ENCODE measurements at regions of chr17 and their contacts with region 1.

Region 1: GRCh38 chr17:42760652-42761581 is at the start of gene RAMP2:
- DNase-seq: peak; percentile 71
- H3K4me3 Mint-ChIP-seq: peak within 1 kb of the TSS; percentile 44
- H3K27ac Mint-ChIP-seq: no peak within 1 kb of the TSS
- H3K4me1 Mint-ChIP-seq: peaks cover 4% of the 10 kb centered on the region
- H3K27me3 Mint-ChIP-seq: peaks cover 60% of the 10 kb centered on the region
- total RNA-seq, gene RAMP2: not detected in 2 replicates

Region 2: GRCh38 chr17:42577532-42578281 is 183.2 kb before region 1 on chr17 and contains the start of gene PSMC3IP:
- intact Hi-C with region 1: loop called (anchors 2 kb)
- DNase-seq: peak; percentile 98
- H3K4me3 Mint-ChIP-seq: peak within 1 kb of the TSS; percentile 88
- H3K27ac Mint-ChIP-seq: peak within 1 kb of the TSS; percentile 96
- H3K4me1 Mint-ChIP-seq: peaks cover 30% of the 10 kb centered on the region
- H3K27me3 Mint-ChIP-seq: no peaks in the 10 kb centered on the region
- total RNA-seq, gene PSMC3IP: 29.1 and 31.1 TPM in 2 replicates

Region 3: DNA sequence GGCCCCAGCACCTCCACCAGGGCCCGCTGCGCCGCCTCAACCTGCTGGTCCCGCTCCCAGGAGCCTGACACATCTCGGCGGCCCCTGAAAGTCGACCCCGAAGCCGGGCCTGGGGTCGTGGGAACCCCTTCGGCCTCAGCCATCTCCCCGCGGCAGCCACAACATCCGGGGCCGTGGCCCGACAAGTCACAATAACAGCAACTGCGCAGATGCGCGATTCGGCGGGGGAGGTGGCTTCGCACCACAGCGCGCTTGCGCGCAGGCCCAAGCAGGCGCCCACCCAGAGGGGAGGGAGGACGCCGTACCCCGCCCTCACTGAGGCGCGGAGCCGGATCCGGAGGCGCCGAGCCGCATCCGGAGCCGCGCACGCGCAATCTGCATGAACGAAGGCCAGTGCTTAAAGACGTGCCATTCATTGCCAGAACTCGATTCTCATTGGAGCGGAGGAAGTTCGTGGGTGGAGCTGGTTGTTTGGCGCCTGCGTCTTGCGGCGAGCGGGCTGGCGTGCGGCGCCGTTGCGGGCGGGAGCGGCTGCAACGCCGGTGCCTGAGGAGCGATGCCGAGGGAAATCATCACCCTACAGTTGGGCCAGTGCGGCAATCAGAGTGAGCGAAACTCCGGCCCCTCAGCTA is 151.6 kb before region 1 on chr17 and contains the starts of genes RETREG3 and TUBG1:
- intact Hi-C with region 1: loop called (anchors 10 kb)
- DNase-seq: peak; percentile 100
- H3K4me3 Mint-ChIP-seq: peak within 1 kb of the TSS; percentile 99
- H3K27ac Mint-ChIP-seq: peak within 1 kb of the TSS; percentile 94
- H3K4me1 Mint-ChIP-seq: peaks cover 30% of the 10 kb centered on the region
- H3K27me3 Mint-ChIP-seq: no peaks in the 10 kb centered on the region
- total RNA-seq, gene RETREG3: 35.8 and 38.3 TPM in 2 replicates
- total RNA-seq, gene TUBG1: 99.9 and 100 TPM in 2 replicates

Region 4: DNA sequence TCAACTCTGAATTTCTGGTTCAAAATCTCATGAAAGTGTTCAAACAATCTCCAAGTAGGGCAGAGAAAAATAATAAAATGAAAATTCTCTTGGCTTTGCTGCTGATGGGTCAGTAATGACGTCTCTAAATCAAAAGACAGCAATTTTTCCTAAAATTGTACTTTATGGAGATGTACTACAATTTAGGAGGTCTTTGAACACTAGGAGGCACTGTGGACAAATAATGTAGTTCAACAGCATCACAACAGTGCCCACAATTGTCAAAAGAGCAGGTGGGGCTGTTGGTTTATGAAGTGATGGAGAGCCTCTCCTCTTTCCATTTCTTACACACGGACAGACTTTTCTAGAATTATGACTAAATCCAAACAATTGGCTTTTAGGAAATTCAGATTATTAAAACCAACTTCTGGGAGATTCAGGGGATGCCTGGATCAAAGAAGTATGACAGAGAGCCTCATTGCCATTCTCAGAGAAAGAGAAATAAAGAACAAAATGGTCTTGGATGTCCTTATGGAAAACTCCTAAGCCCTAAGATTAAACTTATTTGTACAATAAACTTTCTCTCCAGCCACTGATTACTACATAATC is 39.8 kb before region 1 on chr17:
- intact Hi-C with region 1: loop called (anchors 1 kb)
- DNase-seq: peak; percentile 82
- H3K4me3 Mint-ChIP-seq: no peak overlapping the region
- H3K27ac Mint-ChIP-seq: no peak overlapping the region
- H3K4me1 Mint-ChIP-seq: no peaks in the 10 kb centered on the region
- H3K27me3 Mint-ChIP-seq: no peaks in the 10 kb centered on the region

Region 5: DNA sequence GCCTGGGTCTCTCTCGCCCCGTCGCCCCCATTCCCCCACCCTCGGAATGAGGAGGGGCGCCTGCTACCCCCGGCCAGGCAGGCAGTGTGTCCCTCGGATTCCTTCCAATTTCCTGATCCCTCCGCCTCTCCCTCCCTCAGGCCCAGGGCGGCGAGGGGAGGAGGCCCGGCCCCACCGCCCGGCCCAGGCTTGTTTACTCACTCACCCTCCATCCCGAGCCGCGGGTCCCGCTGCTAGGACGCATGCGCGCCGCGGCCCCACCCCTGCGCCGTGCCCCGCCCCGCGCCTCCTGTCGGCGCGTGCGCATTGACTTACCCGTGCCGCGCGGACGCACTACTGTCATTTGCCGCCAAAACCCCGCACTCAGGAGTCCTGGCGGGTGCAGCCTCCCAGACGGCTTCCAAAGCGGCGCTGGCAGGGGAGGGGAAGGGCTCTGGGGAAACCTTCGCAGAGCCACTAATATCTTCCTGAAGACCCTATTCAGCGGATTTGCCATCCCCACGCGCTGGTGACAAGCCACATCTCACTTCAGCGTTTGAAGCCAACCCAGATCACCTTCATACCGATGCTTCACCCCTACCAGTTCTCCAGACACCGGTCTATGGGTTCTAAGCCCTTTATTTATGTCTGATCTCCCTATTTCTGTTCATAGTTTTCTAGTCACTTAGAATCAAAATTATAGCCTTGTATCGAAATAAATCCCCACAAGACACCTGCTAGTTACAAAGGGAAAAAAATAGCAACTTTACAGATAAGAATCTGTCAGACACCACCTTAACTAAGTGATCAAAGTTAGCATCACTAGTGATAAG is 15.9 kb before region 1 on chr17 and contains the start of gene EZH1:
- intact Hi-C with region 1: loop called (anchors 2 kb)
- DNase-seq: peak; percentile 98
- H3K4me3 Mint-ChIP-seq: peak within 1 kb of the TSS; percentile 98
- H3K27ac Mint-ChIP-seq: peak within 1 kb of the TSS; percentile 97
- H3K4me1 Mint-ChIP-seq: peaks cover 17% of the 10 kb centered on the region
- H3K27me3 Mint-ChIP-seq: peaks cover 30% of the 10 kb centered on the region
- total RNA-seq, gene EZH1: 39.5 and 39.6 TPM in 2 replicates